Mammary epithelial cell (primary cell): ENCODE measurements at regions of chr20 and their contacts with region 1.

Region 1: DNA sequence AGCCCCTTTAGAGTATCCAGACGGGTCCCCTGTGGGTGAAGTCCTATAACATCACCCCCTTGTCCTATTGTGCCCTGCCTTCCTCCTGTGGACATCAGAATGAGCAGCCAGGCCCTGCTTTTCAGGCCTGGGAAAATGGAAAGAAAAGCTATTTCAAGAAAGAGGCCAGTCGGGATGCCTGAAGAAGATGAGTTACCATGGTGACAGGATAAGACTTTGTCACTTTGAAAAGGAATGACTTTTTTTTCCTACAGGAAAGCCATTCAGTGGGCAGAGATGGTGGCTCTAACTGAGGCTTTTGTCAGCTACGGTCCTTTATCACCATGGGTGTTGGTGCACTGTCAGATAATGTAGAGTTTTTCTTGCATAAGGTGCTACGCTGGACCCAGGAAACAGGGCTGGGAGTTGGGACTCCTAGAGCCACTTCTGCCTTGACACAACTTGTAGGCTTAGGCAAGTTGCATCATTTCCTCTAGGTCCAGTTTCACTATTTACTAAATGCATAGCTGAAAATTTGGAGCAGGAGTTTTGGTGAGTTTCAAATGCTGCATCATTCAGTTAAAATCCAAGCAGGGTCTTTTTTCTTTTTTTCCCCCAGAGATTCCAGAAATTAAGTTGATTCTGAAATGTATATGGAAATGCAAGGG is 293.6 kb upstream of the PRND start:
- DNase-seq: no peak
- H3K4me3 ChIP-seq: no peak overlapping the region
- H3K27ac ChIP-seq: no peak overlapping the region
- H3K4me1 ChIP-seq: peaks cover 4% of the 10 kb centered on the region
- H3K27me3 ChIP-seq: no peaks in the 10 kb centered on the region
- CTCF ChIP-seq: no peak

Region 2: GRCh38 chr20:4332121-4332860 is 95.8 kb before region 1 on chr20:
- CTCF ChIA-PET with region 1: no interaction called
- dilution Hi-C with region 1: no loop called
- in situ Hi-C with region 1: no loop called
- intact Hi-C with region 1: no loop called
- DNase-seq: no peak
- H3K4me3 ChIP-seq: no peak overlapping the region
- H3K27ac ChIP-seq: no peak overlapping the region
- H3K4me1 ChIP-seq: peaks cover 2% of the 10 kb centered on the region
- H3K27me3 ChIP-seq: no peaks in the 10 kb centered on the region
- CTCF ChIP-seq: no peak

Region 3: DNA sequence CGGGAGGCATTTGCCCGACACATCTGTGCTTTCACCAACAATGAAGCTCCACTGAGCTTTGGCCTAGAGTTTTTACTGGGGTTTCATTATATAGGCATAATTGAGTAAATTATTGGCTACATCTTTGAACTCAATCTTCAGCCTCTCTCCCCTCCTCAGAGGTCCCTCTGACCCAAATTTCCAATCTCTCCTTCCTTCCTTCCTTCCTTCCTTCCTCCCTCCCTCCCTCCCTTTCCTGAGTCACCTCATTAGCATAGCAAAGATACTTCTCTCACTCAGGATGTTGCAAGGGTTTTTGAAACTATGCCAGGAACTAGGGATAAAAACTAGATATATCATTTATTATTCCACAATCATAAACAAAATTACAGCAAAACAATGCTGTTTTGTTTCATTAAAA is 55.4 kb after region 1 on chr20:
- CTCF ChIA-PET with region 1: no interaction called
- dilution Hi-C with region 1: loop called (anchors 5 kb)
- in situ Hi-C with region 1: no loop called
- intact Hi-C with region 1: no loop called
- DNase-seq: peak; percentile 57
- H3K4me3 ChIP-seq: no peak overlapping the region
- H3K27ac ChIP-seq: no peak overlapping the region
- H3K4me1 ChIP-seq: peaks cover 12% of the 10 kb centered on the region
- H3K27me3 ChIP-seq: no peaks in the 10 kb centered on the region
- CTCF ChIP-seq: no peak